BJ (cell line): ENCODE measurements at regions of chr12 and their contacts with region 1.

Region 1: DNA sequence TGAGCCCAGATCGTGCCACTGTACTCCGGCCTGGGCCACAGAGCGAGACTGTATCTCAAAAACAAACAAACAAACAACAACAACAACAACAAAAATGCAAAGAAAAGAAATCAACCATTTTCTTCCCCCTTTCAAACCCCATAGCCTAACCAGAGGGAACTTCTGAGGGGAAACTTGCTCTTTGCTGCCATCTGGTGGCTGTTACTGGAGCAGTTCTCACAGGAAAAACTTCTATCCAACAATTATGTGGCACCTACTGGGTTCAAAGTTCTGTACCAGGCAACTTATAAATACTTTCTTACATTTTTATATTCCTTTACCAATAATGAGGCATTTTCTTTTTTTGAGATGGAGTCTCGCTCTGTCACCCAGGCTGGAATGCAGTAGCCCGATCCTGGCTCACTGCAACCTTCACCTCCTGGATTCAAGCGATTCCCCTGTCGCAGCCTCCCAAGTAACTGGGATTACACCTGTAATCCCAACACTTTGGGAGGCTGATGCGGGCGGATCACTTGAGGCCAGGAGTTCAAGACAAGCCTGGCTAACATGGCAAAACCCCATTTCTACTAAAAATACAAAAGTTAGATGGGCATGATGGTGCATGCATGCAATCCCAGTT is 50.9 kb upstream of the BICDL1 start:
- DNase-seq: no peak
- H3K4me3 ChIP-seq: no peak overlapping the region
- H3K27me3 ChIP-seq: no peaks in the 10 kb centered on the region
- CTCF ChIP-seq: peak; percentile 81

Region 2: GRCh38 chr12:119885549-119885948 is 52.6 kb before region 1 on chr12:
- CTCF ChIA-PET with region 1: no interaction called
- POLR2A ChIA-PET with region 1: no interaction called
- DNase-seq: no peak
- H3K4me3 ChIP-seq: no peak overlapping the region
- H3K27me3 ChIP-seq: no peaks in the 10 kb centered on the region; the same call in 1 of the 2 replicates
- CTCF ChIP-seq: no peak

Region 3: GRCh38 chr12:120039711-120040110 is 101.6 kb after region 1 on chr12:
- CTCF ChIA-PET with region 1: no interaction called
- POLR2A ChIA-PET with region 1: interaction called, 14 read pairs
- DNase-seq: no peak
- H3K4me3 ChIP-seq: no peak overlapping the region
- H3K27me3 ChIP-seq: no peaks in the 10 kb centered on the region; the same call in 1 of the 2 replicates
- CTCF ChIP-seq: no peak